ENCODE measurements at regions of chr6 and their contacts with region 1.

Region 1: GRCh38 chr6:28489366-28490204 is 26.0 kb downstream of the GPX6 start:
- DNase-seq: peak; percentile 76
- H3K4me3 Mint-ChIP-seq: peak overlapping the region; percentile 81
- H3K27ac Mint-ChIP-seq: peak overlapping the region; percentile 79
- H3K4me1 Mint-ChIP-seq: peaks cover 23% of the 10 kb centered on the region
- H3K27me3 Mint-ChIP-seq: peaks cover 59% of the 10 kb centered on the region

Region 2: DNA sequence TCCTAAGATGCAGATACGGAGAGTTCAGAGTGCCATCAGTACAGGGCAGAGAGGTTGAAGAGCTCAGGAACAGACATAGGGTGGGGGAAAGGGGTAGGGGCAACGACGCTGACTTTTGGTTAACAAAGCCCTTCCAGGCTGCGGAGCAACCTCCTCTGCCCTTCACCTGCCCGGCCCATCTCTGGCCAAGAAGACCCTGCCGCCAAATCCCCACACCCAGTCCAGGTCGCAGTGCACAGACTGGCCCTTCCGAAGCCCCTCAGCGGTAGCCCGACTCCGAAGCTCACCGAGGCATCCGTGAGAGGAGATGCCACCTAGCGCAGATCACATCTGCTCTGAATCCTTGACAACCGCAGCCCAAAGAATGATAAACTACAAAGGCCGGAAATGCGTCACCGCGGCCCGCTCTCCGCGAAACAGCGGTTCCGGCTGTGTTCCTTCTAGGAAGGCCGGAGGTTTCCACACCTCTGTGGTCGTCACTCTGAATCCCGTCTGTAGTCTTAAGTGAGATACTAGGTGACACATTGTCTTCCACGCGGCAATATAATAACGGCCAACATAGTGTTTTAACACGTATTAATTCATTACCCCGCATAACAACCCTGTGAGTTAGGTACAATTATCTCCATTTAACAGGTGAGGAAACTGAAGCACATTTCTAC is 46.3 kb before region 1 on chr6 and contains the start of gene ZSCAN23:
- CTCF ChIA-PET with region 1: no interaction called
- intact Hi-C with region 1: loop called (anchors 2 kb)
- DNase-seq: peak; percentile 93
- H3K4me3 Mint-ChIP-seq: peak within 1 kb of the TSS; percentile 98
- H3K27ac Mint-ChIP-seq: peak within 1 kb of the TSS; percentile 87
- H3K4me1 Mint-ChIP-seq: peaks cover 31% of the 10 kb centered on the region
- H3K27me3 Mint-ChIP-seq: peaks cover 24% of the 10 kb centered on the region
- total RNA-seq, gene ZSCAN23: 1.7 to 2.0 TPM

Region 3: GRCh38 chr6:28474441-28475219 is 15.0 kb before region 1 on chr6:
- CTCF ChIA-PET with region 1: no interaction called
- intact Hi-C with region 1: loop called (anchors 1 kb)
- DNase-seq: peak; percentile 42
- H3K4me3 Mint-ChIP-seq: peak overlapping the region; percentile 68
- H3K27ac Mint-ChIP-seq: peak overlapping the region; percentile 36
- H3K4me1 Mint-ChIP-seq: peaks cover 13% of the 10 kb centered on the region
- H3K27me3 Mint-ChIP-seq: peaks cover 40% of the 10 kb centered on the region

Region 4: GRCh38 chr6:28586962-28587745 is 97.6 kb after region 1 on chr6:
- CTCF ChIA-PET with region 1: interaction called, 3 read pairs
- intact Hi-C with region 1: loop called (anchors 1 kb)
- DNase-seq: peak; percentile 80
- H3K4me3 Mint-ChIP-seq: peak overlapping the region; percentile 85
- H3K27ac Mint-ChIP-seq: no peak overlapping the region
- H3K4me1 Mint-ChIP-seq: peaks cover 21% of the 10 kb centered on the region
- H3K27me3 Mint-ChIP-seq: peaks cover 61% of the 10 kb centered on the region